PC-3 (cell line): ENCODE measurements at regions of chr16 and their contacts with region 1.

Region 1: GRCh38 chr16:74606521-74607310 is at the start of gene GLG1:
- DNase-seq: peak; percentile 86
- ATAC-seq: peak; percentile 90
- H3K4me3 ChIP-seq: peak within 1 kb of the TSS; percentile 80
- H3K27ac ChIP-seq: peak within 1 kb of the TSS; percentile 62
- H3K4me1 ChIP-seq: peaks cover 25% of the 10 kb centered on the region
- H3K27me3 ChIP-seq: no peaks in the 10 kb centered on the region
- CTCF ChIP-seq: no peak
- total RNA-seq, gene GLG1: 63.5 and 86.4 TPM in 2 replicates

Region 2: DNA sequence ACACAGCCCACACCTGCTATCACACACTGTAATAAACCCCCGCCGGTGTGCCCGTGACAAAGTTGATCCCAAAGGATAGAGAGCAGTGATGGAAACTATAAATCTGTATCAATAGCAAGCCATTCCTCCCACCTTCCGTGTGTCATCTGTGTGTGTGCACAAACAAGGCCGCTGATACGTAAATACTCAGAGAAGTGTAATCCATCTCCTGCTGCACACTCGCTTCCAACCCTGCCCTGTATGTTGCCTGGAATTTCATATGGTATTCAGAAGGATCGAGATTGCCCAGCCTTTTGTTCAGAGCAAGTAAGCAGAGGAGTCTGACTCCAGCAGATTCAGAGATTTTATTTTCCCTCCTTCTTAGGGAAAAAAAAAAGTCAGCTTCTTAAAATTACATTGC is 977.7 kb before region 1 on chr16:
- CTCF ChIA-PET with region 1: no interaction called
- POLR2A ChIA-PET with region 1: no interaction called
- intact Hi-C with region 1: no loop called
- DNase-seq: no peak
- ATAC-seq: no peak
- H3K4me3 ChIP-seq: no peak overlapping the region
- H3K27ac ChIP-seq: no peak overlapping the region
- H3K4me1 ChIP-seq: no peaks in the 10 kb centered on the region
- H3K27me3 ChIP-seq: peaks cover 45% of the 10 kb centered on the region
- CTCF ChIP-seq: no peak

Region 3: DNA sequence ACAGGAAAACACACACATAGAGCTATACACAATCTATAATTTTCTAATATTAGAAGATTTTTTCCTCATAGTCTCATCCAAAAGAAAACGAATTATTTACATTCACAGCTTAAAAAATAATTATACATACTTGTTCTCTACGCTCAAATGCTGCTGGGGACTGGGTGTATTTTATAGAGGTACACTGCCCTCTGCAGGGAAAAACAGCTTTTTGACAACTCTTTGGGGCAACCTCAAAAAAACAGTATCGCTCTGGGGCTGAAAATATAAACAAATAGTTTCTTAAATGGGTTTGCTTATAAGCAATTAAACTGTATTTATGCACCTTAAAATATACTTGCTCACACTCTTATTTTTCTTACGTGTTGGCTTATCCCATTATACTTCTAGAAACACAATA is 571.9 kb before region 1 on chr16:
- CTCF ChIA-PET with region 1: no interaction called
- POLR2A ChIA-PET with region 1: no interaction called
- intact Hi-C with region 1: no loop called
- DNase-seq: peak; percentile 36
- ATAC-seq: no peak
- H3K4me3 ChIP-seq: no peak overlapping the region
- H3K27ac ChIP-seq: no peak overlapping the region
- H3K4me1 ChIP-seq: no peaks in the 10 kb centered on the region
- H3K27me3 ChIP-seq: peaks cover 21% of the 10 kb centered on the region
- CTCF ChIP-seq: peak; percentile 55

Region 4: GRCh38 chr16:74480141-74481029 is 126.3 kb before region 1 on chr16:
- CTCF ChIA-PET with region 1: no interaction called
- POLR2A ChIA-PET with region 1: no interaction called
- intact Hi-C with region 1: loop called (anchors 5 kb)
- DNase-seq: peak; percentile 90
- ATAC-seq: peak; percentile 99
- H3K4me3 ChIP-seq: no peak overlapping the region
- H3K27ac ChIP-seq: peak overlapping the region; percentile 16; the same call in 1 of the 2 replicates
- H3K4me1 ChIP-seq: peaks cover 17% of the 10 kb centered on the region
- H3K27me3 ChIP-seq: no peaks in the 10 kb centered on the region
- CTCF ChIP-seq: no peak

Region 5: DNA sequence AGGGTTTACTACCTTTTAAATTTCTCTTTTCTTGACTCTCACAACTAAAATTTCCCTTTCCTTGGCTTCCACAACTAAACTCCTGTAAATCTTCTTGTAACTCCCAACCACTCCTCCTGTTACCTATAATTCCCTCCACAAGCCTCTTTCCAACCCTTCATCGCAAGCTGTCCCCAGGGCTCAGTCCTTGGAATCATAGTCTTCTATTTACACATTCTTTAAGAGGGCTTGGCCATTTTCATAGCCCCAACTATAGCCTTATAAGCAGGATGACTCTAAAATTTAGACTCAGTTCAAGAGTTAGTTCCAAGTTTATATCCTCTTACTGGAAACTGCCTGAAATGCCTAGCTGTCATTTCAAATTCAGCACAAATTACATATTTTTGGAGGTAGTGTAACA is 23.7 kb before region 1 on chr16:
- CTCF ChIA-PET with region 1: no interaction called
- POLR2A ChIA-PET with region 1: no interaction called
- intact Hi-C with region 1: loop called (anchors 1 kb)
- DNase-seq: no peak
- ATAC-seq: peak; percentile 52
- H3K4me3 ChIP-seq: no peak overlapping the region
- H3K27ac ChIP-seq: no peak overlapping the region
- H3K4me1 ChIP-seq: peaks cover 11% of the 10 kb centered on the region
- H3K27me3 ChIP-seq: no peaks in the 10 kb centered on the region
- CTCF ChIP-seq: no peak